Esophagus squamous epithelium (tissue), 5 donors: ENCODE measurements at regions of chr13 and their contacts with region 1.

Region 1: GRCh38 chr13:23871616-23872220 is 17.5 kb downstream of the MIPEP start:
- DNase-seq: no peak
- H3K4me3 ChIP-seq: no peak overlapping the region
- H3K27ac ChIP-seq: peak overlapping the region in 1 of 4 donors; percentile 11
- H3K4me1 ChIP-seq: peaks cover 0 to 28% (median 4%) of the 10 kb centered on the region in 3 donors
- H3K27me3 ChIP-seq: no peaks in the 10 kb centered on the region
- CTCF ChIP-seq: peak; percentile 42 to 76 (median 56)
- POLR2A ChIP-seq: no peak

Region 2: DNA sequence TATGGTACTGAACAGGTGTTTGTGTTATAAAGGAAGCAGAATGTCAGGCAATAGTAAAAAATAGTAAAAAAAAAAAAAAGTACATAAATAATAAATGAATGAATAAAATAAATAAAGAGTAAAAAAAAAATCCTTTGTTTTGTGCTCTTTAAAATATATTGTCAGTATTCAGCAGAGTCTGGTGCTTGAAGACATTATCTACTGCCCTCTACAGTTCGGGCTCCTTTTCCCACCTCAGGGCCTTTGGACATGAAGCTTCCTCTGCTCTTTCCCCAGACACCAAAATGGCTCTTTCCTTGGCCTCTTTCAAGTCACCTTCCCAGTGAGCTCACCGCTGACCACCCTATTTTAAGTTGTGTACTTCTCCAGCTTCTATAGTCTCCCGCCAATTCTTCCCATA is 164.0 kb before region 1 on chr13:
- intact Hi-C with region 1: loop called (anchors 10 kb)
- DNase-seq: no peak
- H3K4me3 ChIP-seq: no peak overlapping the region
- H3K27ac ChIP-seq: no peak overlapping the region
- H3K4me1 ChIP-seq: peaks cover 3 to 13% (median 5%) of the 10 kb centered on the region in 3 donors
- H3K27me3 ChIP-seq: no peaks in the 10 kb centered on the region
- CTCF ChIP-seq: peak in 4 of 6 experiments; percentile 10 to 41 (median 19)
- POLR2A ChIP-seq: no peak

Region 3: DNA sequence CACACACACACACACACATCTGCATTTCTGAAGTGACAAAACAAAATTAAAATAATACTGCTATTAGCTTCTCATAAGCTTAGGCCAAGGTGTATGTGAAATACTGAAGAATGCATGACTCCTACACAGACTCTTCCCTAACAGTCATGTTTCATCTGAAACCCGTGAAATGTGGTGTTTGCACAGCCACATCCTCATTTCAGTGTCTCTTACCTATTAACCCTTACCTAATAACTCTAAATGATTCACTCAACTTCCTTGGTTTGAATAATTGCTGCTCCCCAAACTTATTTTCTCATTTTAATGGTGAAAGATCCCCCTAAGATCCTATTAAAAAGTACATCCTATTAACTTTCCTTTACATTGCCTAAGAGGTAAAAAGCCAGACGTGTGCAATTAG is 100.2 kb before region 1 on chr13:
- intact Hi-C with region 1: no loop called
- DNase-seq: no peak
- H3K4me3 ChIP-seq: no peak overlapping the region
- H3K27ac ChIP-seq: peak overlapping the region in 1 of 4 donors; percentile 22
- H3K4me1 ChIP-seq: peaks cover 0 to 18% (median 4%) of the 10 kb centered on the region in 3 donors
- H3K27me3 ChIP-seq: no peaks in the 10 kb centered on the region
- CTCF ChIP-seq: no peak
- POLR2A ChIP-seq: no peak

Region 4: DNA sequence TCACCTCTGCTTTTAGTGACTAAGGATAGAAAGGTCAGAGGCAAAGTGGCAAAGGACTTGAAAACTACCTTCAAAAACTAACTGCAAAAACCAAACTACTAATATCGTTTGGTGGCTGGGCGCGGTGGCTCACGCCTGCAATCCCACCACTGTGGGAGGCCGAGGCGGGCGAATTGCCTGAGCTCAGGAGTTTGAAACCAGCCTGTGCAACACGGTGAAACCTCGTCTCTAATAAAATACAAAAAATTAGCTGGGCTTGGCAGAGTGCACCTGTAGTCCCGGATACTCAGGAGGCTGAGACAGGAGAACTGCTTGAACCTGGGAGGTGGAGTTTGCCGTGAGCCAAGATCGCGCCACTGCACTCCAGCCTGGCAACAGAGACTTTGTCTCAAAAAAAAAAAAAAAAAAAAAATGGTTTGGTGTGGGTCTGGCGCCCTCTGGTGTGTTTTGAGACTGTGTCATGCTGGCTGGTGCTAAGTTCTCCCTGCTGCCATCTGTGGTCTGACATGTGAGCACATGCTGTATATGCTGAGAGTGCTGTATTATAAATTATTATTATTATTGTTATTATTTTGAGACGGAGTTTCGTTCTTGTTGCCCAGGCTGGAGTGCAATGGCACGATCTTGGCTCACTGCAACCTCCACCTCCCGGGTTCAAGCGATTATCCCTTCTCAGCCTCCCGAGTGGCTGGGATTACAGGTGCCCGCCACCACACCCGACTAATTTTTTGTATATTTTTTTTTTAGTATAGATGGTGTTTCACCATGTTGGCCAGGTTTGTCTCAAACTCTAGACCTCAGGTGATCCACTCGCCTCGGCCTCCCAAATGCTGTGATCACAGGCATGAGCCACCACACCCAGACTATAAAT is 856.2 kb after region 1 on chr13:
- intact Hi-C with region 1: no loop called
- DNase-seq: no peak
- H3K4me3 ChIP-seq: no peak overlapping the region
- H3K27ac ChIP-seq: no peak overlapping the region
- H3K4me1 ChIP-seq: no peaks in the 10 kb centered on the region
- H3K27me3 ChIP-seq: peaks cover 0 to 18% (median 0%) of the 10 kb centered on the region in 4 donors
- CTCF ChIP-seq: peak in 5 of 6 experiments; percentile 61 to 80 (median 69)
- POLR2A ChIP-seq: no peak